Activated CD8-positive, alpha-beta memory T cell treated with anti-CD3 and anti-CD28 coated beads, Interleukin-2, amount 10 ng/mL, durations not matched to agents 7 days and 5 days (primary cell): ENCODE measurements at regions of chr11 and their contacts with region 1.

Region 1: GRCh38 chr11:128323381-128323780 is 264.0 kb downstream of the ETS1 start:
- DNase-seq: peak; percentile 77
- ATAC-seq: peak; percentile 25
- H3K4me3 Mint-ChIP-seq: peak overlapping the region; percentile 60
- H3K27ac Mint-ChIP-seq: peak overlapping the region; percentile 93
- H3K4me1 Mint-ChIP-seq: peaks cover 91% of the 10 kb centered on the region
- H3K27me3 Mint-ChIP-seq: no peaks in the 10 kb centered on the region

Region 2: DNA sequence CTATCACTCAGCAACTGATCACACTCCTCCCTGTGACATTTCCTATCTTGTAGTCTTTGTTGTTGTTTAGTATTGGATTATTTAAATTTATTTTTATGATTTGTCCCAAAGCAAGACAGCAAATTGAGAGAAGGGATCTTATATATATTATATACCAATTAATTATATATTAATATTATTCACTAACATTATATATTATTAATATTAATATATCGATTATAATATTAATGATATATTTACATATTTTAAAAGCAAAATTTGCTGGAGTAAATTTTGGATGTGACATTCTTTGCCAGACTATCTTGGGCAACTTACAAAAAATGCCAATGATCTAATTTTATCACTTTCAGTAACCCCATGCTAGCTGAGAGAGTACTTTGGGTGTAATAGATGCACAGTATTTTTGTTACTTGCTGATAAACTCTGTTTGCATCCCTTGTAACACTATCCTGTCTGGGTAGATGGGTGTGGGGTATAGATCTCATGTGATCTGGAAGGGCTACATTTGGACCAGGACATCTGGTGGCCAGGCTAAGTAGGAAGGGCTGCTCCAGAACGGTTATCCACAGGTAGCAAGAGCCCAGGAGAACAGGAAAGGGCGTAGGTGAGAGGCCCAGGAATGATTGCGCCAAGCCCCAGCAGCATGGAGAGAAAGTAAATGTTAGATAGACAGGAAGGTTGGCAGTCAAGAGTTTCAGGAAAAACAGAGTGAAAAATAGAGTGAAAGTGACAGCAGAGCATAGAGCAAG is 714.2 kb before region 1 on chr11:
- CTCF ChIA-PET with region 1: no interaction called
- DNase-seq: no peak
- ATAC-seq: no peak
- H3K4me3 Mint-ChIP-seq: no peak overlapping the region
- H3K27ac Mint-ChIP-seq: no peak overlapping the region
- H3K4me1 Mint-ChIP-seq: no peaks in the 10 kb centered on the region
- H3K27me3 Mint-ChIP-seq: no peaks in the 10 kb centered on the region

Region 3: GRCh38 chr11:128172046-128172878 is 151.1 kb before region 1 on chr11:
- CTCF ChIA-PET with region 1: interaction called, 13 read pairs
- DNase-seq: peak; percentile 91
- ATAC-seq: peak; percentile 93
- H3K4me3 Mint-ChIP-seq: no peak overlapping the region
- H3K27ac Mint-ChIP-seq: no peak overlapping the region
- H3K4me1 Mint-ChIP-seq: peaks cover 9% of the 10 kb centered on the region
- H3K27me3 Mint-ChIP-seq: no peaks in the 10 kb centered on the region

Region 4: DNA sequence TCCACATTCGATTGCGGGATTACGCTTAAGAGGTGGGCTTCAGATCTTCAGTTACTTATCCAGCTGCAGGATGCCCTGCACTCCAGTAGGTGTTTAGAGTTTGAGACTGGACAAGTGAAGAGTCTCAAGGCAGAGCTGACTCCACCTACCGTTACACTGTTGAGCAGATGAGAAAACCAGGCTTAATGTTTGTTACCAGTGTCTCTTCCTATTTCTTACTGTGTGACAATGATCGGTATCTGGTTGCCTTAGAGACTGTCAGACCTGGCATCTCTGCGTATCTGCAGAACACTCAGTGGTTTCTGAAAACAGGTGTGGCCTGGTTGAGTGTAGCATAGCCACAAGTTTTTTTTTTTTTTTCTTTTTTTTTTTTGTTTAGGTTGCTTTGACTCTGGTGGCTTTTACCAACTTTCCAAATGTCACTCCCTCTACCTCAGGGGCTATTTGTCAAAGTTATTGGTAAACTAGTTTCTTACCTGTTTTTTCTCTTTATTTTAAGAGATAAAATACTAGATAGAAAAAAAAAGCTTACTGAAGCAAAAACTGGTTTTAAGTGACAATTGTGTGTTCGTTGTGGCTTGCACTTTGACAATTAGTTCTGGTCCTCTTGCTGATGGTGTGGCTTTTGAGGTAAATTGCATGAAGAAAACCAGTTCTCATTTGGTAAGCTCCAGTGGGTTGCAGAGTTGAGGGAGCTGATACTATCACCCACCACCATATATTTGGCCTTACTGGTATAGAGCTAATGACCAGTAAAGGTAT is 20.8 kb before region 1 on chr11:
- CTCF ChIA-PET with region 1: interaction called, 82 read pairs
- DNase-seq: peak; percentile 88
- ATAC-seq: peak; percentile 91
- H3K4me3 Mint-ChIP-seq: peak overlapping the region; percentile 90
- H3K27ac Mint-ChIP-seq: peak overlapping the region; percentile 98
- H3K4me1 Mint-ChIP-seq: peaks cover 74% of the 10 kb centered on the region
- H3K27me3 Mint-ChIP-seq: no peaks in the 10 kb centered on the region

Region 5: GRCh38 chr11:128342511-128343134 is 19.2 kb after region 1 on chr11:
- CTCF ChIA-PET with region 1: interaction called, 31 read pairs
- DNase-seq: peak; percentile 86
- ATAC-seq: peak; percentile 85
- H3K4me3 Mint-ChIP-seq: no peak overlapping the region
- H3K27ac Mint-ChIP-seq: peak overlapping the region; percentile 95
- H3K4me1 Mint-ChIP-seq: peaks cover 68% of the 10 kb centered on the region
- H3K27me3 Mint-ChIP-seq: no peaks in the 10 kb centered on the region

Region 6: GRCh38 chr11:128354476-128354875 is 31.1 kb after region 1 on chr11:
- CTCF ChIA-PET with region 1: no interaction called
- DNase-seq: no peak
- ATAC-seq: no peak
- H3K4me3 Mint-ChIP-seq: no peak overlapping the region
- H3K27ac Mint-ChIP-seq: no peak overlapping the region
- H3K4me1 Mint-ChIP-seq: peaks cover 12% of the 10 kb centered on the region
- H3K27me3 Mint-ChIP-seq: no peaks in the 10 kb centered on the region

Region 7: DNA sequence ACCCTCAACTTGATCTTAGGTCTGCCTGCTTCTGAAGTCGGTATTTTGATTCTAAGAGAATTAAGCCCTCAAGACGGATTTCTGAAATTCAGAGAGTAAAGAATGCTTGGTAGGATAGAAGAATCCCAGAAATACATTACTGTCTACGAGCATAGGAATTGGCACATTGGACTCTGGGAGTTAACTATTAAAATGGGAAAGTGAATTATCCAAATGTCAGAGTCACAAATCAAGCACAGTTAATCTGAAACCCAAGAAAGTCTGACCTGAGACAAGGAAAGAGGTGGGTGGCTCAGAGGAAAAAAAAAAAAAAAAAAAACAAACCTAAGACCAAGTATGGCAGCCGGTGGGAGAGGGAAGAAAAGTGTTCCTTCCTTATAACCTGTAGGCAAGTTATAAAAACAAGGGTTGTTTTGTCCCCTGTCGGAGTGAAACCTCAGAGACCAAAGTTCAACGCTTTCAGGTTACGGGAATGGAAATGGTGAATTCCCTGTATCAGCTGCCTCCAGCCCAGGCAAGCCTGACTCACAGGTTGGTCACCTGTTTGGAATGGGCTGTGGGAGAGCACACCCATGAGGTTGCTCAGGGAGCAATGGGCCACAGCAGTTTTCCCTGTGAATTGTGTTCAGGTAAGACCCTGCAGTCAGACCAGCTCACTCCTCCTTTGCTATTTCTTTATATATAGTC is 125.0 kb after region 1 on chr11:
- CTCF ChIA-PET with region 1: interaction called, 11 read pairs
- DNase-seq: no peak
- ATAC-seq: no peak
- H3K4me3 Mint-ChIP-seq: no peak overlapping the region
- H3K27ac Mint-ChIP-seq: peak overlapping the region; percentile 75
- H3K4me1 Mint-ChIP-seq: peaks cover 45% of the 10 kb centered on the region
- H3K27me3 Mint-ChIP-seq: no peaks in the 10 kb centered on the region

Region 8: DNA sequence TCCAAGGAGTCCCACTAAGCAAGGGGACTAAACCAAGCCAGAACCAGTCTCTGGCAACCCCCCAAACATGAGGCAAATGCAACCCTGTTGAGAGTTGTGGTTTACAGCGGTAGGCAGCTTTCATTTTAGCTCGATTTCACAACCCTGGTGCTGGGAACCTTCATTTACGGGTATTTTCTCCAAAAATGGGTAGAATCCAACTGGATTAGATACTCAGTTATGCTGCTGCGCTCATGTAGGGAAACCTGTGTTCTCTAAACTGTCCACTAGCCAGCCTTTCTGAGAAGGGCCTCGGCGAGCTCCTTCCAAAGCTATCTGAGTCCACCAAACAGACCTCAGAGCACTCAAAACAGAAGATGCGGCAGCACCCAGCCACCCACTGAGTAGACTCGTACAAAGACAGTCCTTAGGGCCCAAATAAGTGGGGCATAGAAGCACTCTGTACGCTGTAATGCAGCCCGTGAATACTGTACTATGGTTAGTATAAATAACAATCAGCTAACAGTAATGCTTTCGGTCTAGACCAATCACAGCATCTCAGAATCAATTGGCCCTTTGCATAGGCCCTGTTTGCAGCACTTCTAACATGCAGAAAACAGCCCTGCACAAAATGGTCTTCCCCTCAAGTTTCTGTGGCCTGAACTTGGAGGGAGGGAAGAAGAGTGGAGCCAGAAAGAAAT is 159.3 kb after region 1 on chr11:
- CTCF ChIA-PET with region 1: interaction called, 37 read pairs
- DNase-seq: peak; percentile 83
- ATAC-seq: peak; percentile 81
- H3K4me3 Mint-ChIP-seq: peak overlapping the region; percentile 67
- H3K27ac Mint-ChIP-seq: peak overlapping the region; percentile 95
- H3K4me1 Mint-ChIP-seq: peaks cover 95% of the 10 kb centered on the region
- H3K27me3 Mint-ChIP-seq: no peaks in the 10 kb centered on the region

Region 9: DNA sequence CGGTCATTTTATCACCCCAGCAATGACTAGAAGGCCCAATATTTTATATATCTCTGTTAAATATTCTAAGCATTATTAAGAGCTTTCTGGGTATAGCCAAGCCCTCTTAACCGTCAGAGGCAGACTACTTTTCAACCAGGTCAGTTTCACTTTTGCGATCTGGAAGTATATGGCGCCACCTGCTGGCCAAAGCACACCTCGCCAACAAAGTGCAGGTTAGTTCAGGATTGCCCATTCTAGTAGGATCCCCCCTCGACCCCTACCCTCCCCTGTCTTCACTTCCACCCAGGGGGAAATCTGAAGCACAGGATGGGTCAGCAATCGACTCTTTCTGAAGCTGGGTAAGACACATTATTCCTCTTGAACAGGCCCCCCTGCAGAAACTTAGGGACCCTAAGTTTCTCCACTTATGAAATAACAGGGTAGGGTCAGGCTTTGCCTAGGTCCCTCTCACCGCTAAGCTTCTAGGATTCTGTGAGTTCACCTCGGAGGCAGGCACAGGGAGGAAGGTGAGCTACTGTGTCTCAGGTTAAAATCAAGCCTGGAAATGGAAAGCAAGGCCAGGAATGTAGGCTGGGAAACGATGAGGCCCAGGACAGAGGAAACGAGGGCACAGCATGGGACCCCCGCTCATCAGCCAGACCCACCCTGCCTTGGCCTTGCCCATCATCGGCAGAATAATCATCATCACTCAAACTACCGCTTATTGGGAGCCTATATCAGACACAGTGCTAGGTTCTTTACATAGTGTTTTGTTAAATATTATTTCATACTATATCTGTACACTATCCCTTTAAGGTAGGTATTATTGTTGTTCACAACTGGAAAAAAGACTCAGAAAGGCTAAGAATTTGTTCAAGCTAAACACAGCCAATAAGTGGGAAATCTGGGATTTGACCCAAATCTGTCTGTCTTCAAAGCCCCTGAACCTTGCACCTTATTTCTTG is 508.1 kb after region 1 on chr11:
- CTCF ChIA-PET with region 1: interaction called, 11 read pairs
- DNase-seq: peak; percentile 92
- ATAC-seq: peak; percentile 90
- H3K4me3 Mint-ChIP-seq: peak overlapping the region; percentile 66
- H3K27ac Mint-ChIP-seq: peak overlapping the region; percentile 95
- H3K4me1 Mint-ChIP-seq: peaks cover 28% of the 10 kb centered on the region
- H3K27me3 Mint-ChIP-seq: no peaks in the 10 kb centered on the region